Activated CD4-positive, alpha-beta memory T cell treated with anti-CD3 and anti-CD28 coated beads for 36 hours (primary cell): ENCODE measurements at regions of chr14 and their contacts with region 1.

Region 1: GRCh38 chr14:61461808-61462275 is 140.5 kb downstream of the PRKCH start:
- DNase-seq: no peak
- H3K4me3 Mint-ChIP-seq: no peak overlapping the region
- H3K27ac Mint-ChIP-seq: peak overlapping the region; percentile 90
- H3K4me1 Mint-ChIP-seq: peaks cover 63% of the 10 kb centered on the region
- H3K27me3 Mint-ChIP-seq: no peaks in the 10 kb centered on the region

Region 2: DNA sequence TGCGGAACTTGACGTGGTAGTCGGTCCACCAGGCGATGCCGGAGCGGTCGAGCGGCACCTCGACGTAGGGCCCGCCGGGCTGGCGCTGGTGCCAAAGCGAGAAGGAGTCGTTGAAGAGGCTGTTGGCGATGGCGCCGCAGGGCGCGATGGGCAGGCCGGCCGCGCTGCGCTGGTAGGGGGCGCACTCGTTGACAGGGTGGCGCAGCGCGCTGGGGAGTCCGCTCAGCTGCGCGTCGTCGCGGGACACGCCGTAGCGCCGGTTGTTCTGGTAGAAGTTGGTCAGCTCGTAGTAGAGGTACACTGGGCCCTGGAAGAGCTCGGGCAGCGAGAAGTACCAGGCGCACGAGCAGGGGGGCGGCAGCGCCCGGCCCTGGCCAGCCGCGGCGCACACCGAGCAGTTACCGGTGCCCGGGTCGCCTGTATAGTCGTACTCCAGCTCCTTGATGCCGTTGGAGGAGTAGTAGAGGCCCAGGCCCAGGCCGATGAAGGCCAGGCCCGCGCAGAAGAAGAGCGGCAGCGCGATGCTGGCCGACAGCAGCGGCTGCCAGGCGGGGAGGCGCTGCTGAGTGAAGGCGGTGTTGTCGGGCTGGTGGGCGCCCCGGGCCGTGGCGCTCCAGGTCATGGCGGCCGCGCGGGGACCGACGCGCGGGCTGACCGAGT is 181.2 kb before region 1 on chr14:
- CTCF ChIA-PET with region 1: interaction called, 11 read pairs
- POLR2A ChIA-PET with region 1: no interaction called
- intact Hi-C with region 1: no loop called
- DNase-seq: peak; percentile 82
- H3K4me3 Mint-ChIP-seq: peak overlapping the region; percentile 87
- H3K27ac Mint-ChIP-seq: peak overlapping the region; percentile 70
- H3K4me1 Mint-ChIP-seq: peaks cover 34% of the 10 kb centered on the region
- H3K27me3 Mint-ChIP-seq: peaks cover 3% of the 10 kb centered on the region

Region 3: GRCh38 chr14:61296719-61297502 is 164.9 kb before region 1 on chr14:
- CTCF ChIA-PET with region 1: interaction called, 9 read pairs
- POLR2A ChIA-PET with region 1: no interaction called
- intact Hi-C with region 1: loop called (anchors 1 kb)
- DNase-seq: no peak
- H3K4me3 Mint-ChIP-seq: no peak overlapping the region
- H3K27ac Mint-ChIP-seq: no peak overlapping the region
- H3K4me1 Mint-ChIP-seq: peaks cover 44% of the 10 kb centered on the region
- H3K27me3 Mint-ChIP-seq: no peaks in the 10 kb centered on the region

Region 4: DNA sequence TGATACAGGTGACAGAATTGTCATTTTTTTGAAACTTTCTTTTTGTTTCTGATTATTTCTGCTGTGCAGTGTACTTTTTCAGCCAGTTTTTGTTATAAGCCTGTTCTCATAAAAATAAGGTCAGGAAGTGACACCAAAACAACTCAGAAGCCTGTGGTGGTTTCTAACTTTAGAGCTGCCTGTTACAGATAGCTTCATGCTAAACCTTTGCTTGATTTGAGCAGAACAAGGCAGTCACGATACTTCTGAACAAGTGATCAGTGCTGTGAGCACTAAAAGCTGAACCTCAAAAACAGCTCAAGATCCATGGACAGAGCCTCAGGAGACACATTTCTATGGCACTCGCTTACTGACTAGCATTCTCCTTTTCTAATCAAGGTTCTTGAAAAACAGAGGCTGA is 58.4 kb before region 1 on chr14:
- CTCF ChIA-PET with region 1: no interaction called
- POLR2A ChIA-PET with region 1: no interaction called
- intact Hi-C with region 1: no loop called
- DNase-seq: no peak
- H3K4me3 Mint-ChIP-seq: peak overlapping the region; percentile 49
- H3K27ac Mint-ChIP-seq: peak overlapping the region; percentile 88
- H3K4me1 Mint-ChIP-seq: peaks cover 85% of the 10 kb centered on the region
- H3K27me3 Mint-ChIP-seq: no peaks in the 10 kb centered on the region

Region 5: DNA sequence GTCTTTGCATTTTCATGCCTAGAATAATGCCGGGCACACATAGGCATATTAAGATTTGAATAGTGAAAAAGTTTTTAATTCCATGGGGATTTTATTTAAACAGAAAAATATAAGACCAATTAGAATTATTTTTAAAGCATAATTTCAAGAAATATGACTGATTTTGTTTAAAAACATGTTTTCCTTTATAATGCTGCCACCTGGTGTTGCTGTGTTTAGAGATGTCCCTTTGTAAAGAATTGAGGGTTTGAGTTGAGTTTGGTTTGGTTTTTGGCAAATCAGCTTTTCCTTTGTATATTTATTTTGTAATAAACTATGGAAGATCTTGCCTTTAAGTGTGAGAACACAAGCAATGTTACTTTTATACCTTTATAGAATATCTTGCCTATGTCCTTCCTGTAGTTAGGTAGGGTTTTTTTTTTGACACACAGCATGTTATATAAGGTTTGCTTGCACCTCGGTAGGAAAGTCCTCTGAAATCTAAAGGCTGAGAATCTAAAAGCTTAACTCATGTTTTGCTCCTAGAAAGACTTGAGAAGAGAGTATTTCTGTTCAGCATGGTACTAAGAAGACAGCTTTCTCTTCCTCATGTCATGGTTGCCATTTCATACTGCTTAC is 269.0 kb after region 1 on chr14:
- CTCF ChIA-PET with region 1: interaction called, 16 read pairs
- POLR2A ChIA-PET with region 1: no interaction called
- intact Hi-C with region 1: loop called (anchors 2 kb)
- DNase-seq: no peak
- H3K4me3 Mint-ChIP-seq: no peak overlapping the region
- H3K27ac Mint-ChIP-seq: peak overlapping the region; percentile 28
- H3K4me1 Mint-ChIP-seq: peaks cover 51% of the 10 kb centered on the region
- H3K27me3 Mint-ChIP-seq: no peaks in the 10 kb centered on the region

Region 6: GRCh38 chr14:61894452-61895077 is 432.7 kb after region 1 on chr14:
- CTCF ChIA-PET with region 1: no interaction called
- POLR2A ChIA-PET with region 1: no interaction called
- intact Hi-C with region 1: loop called (anchors 5 kb)
- DNase-seq: peak; percentile 68
- H3K4me3 Mint-ChIP-seq: no peak overlapping the region
- H3K27ac Mint-ChIP-seq: no peak overlapping the region
- H3K4me1 Mint-ChIP-seq: peaks cover 10% of the 10 kb centered on the region
- H3K27me3 Mint-ChIP-seq: peaks cover 5% of the 10 kb centered on the region

Region 7: GRCh38 chr14:62126879-62127478 is 665.1 kb after region 1 on chr14:
- CTCF ChIA-PET with region 1: interaction called, 3 read pairs
- POLR2A ChIA-PET with region 1: no interaction called
- intact Hi-C with region 1: loop called (anchors 5 kb)
- DNase-seq: no peak
- H3K4me3 Mint-ChIP-seq: no peak overlapping the region
- H3K27ac Mint-ChIP-seq: no peak overlapping the region
- H3K4me1 Mint-ChIP-seq: no peaks in the 10 kb centered on the region
- H3K27me3 Mint-ChIP-seq: peaks cover 20% of the 10 kb centered on the region